Right ventricle myocardium inferior (tissue), 1 donor: ENCODE measurements at regions of chr9 and their contacts with region 1.

Region 1: GRCh38 chr9:73011181-73011750 is 58.4 kb upstream of the ALDH1A1 start:
- DNase-seq: no peak
- ATAC-seq: peak; percentile 39

Region 2: GRCh38 chr9:72952914-72953313 is 58.4 kb before region 1 on chr9 and contains the start of gene ALDH1A1:
- intact Hi-C with region 1: loop called (anchors 10 kb)
- DNase-seq: no peak
- ATAC-seq: peak; percentile 36
- total RNA-seq, gene ALDH1A1: 25.7 TPM

Region 3: DNA sequence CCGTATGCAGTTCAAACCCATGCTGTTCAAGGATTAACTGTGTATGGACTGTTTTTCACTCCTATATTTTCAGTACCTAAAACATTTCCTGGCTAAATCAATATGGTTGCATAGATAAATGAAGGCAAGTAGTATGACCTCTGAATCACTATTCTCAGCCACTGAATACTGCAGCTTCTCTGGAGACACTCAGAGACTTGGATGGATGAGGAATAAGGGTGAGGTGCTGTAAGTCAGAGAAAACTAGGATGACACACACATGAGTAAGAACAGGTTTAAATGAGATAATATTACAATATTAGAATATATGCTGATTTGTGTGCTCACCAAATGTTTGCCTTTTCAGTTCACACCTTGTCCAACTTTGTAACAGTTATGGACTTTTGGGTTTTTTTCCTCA is 114.4 kb after region 1 on chr9:
- intact Hi-C with region 1: no loop called
- DNase-seq: no peak
- ATAC-seq: no peak

Region 4: DNA sequence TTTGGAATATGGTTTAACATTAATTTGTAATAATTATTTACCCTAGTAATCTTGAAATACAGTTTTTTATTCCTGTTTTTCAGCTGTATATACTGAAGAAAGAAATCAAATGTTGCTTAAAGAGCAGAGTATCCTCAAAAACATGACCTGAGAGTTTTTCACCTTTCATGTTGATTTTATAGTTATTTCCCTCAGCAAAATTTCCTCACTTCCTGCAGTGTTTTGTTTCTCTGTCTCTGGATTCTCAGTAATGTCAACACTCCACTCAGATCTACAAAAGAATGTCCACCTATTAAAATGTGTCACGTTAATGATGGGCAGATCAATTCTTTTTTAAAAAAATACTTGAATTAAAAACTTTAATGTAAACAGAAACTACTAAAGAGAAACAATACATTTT is 538.7 kb after region 1 on chr9:
- intact Hi-C with region 1: no loop called
- DNase-seq: no peak
- ATAC-seq: no peak